Mammary epithelial cell (primary cell): ENCODE measurements at regions of chr3 and their contacts with region 1.

Region 1: GRCh38 chr3:62718515-62719320 is 156.5 kb downstream of the CADPS start:
- DNase-seq: peak; percentile 70
- H3K4me3 ChIP-seq: no peak overlapping the region
- H3K27ac ChIP-seq: peak overlapping the region; percentile 55
- H3K4me1 ChIP-seq: peaks cover 34% of the 10 kb centered on the region
- H3K27me3 ChIP-seq: no peaks in the 10 kb centered on the region
- CTCF ChIP-seq: no peak

Region 2: GRCh38 chr3:62688050-62688449 is 30.7 kb before region 1 on chr3:
- CTCF ChIA-PET with region 1: no interaction called
- dilution Hi-C with region 1: no loop called
- in situ Hi-C with region 1: no loop called
- intact Hi-C with region 1: loop called (anchors 2 kb)
- DNase-seq: peak; percentile 45
- H3K4me3 ChIP-seq: no peak overlapping the region
- H3K27ac ChIP-seq: no peak overlapping the region
- H3K4me1 ChIP-seq: peaks cover 26% of the 10 kb centered on the region
- H3K27me3 ChIP-seq: no peaks in the 10 kb centered on the region
- CTCF ChIP-seq: no peak